Caco-2 (cell line): ENCODE measurements at regions of chr2 and their contacts with region 1.

Region 1: GRCh38 chr2:125696561-125696960 is 959.4 kb upstream of the GYPC start:
- DNase-seq: no peak
- H3K4me3 ChIP-seq: no peak overlapping the region
- H3K4me3 Mint-ChIP-seq: no peak overlapping the region
- H3K27ac Mint-ChIP-seq: no peak overlapping the region
- H3K4me1 ChIP-seq: no peaks in the 10 kb centered on the region
- H3K4me1 Mint-ChIP-seq: no peaks in the 10 kb centered on the region
- H3K27me3 ChIP-seq: no peaks in the 10 kb centered on the region
- H3K27me3 Mint-ChIP-seq: no peaks in the 10 kb centered on the region
- CTCF ChIP-seq: no peak

Region 2: GRCh38 chr2:125643585-125643984 is 53.0 kb before region 1 on chr2:
- CTCF ChIA-PET with region 1: no interaction called
- POLR2A ChIA-PET with region 1: no interaction called
- intact Hi-C with region 1: no loop called
- DNase-seq: no peak
- H3K4me3 ChIP-seq: no peak overlapping the region
- H3K4me3 Mint-ChIP-seq: no peak overlapping the region
- H3K27ac Mint-ChIP-seq: no peak overlapping the region
- H3K4me1 ChIP-seq: no peaks in the 10 kb centered on the region
- H3K4me1 Mint-ChIP-seq: no peaks in the 10 kb centered on the region
- H3K27me3 ChIP-seq: no peaks in the 10 kb centered on the region
- H3K27me3 Mint-ChIP-seq: peaks cover 4% of the 10 kb centered on the region
- CTCF ChIP-seq: no peak

Region 3: GRCh38 chr2:125684932-125685331 is 11.6 kb before region 1 on chr2:
- CTCF ChIA-PET with region 1: no interaction called
- POLR2A ChIA-PET with region 1: no interaction called
- intact Hi-C with region 1: loop called (anchors 1 kb)
- DNase-seq: no peak
- H3K4me3 ChIP-seq: no peak overlapping the region
- H3K4me3 Mint-ChIP-seq: no peak overlapping the region
- H3K27ac Mint-ChIP-seq: no peak overlapping the region
- H3K4me1 ChIP-seq: no peaks in the 10 kb centered on the region
- H3K4me1 Mint-ChIP-seq: no peaks in the 10 kb centered on the region
- H3K27me3 ChIP-seq: no peaks in the 10 kb centered on the region
- H3K27me3 Mint-ChIP-seq: peaks cover 5% of the 10 kb centered on the region
- CTCF ChIP-seq: no peak